ENCODE measurements at regions of chr20 and their contacts with region 1.

Region 1: GRCh38 chr20:18287915-18288748 is at the start of gene ZNF133:
- DNase-seq: peak; percentile 96
- H3K4me3 Mint-ChIP-seq: peak within 1 kb of the TSS; percentile 95
- H3K27ac Mint-ChIP-seq: peak within 1 kb of the TSS; percentile 93
- H3K4me1 Mint-ChIP-seq: peaks cover 29% of the 10 kb centered on the region
- H3K27me3 Mint-ChIP-seq: peaks cover 15% of the 10 kb centered on the region
- total RNA-seq, gene ZNF133: 8.4 to 10.2 TPM

Region 2: DNA sequence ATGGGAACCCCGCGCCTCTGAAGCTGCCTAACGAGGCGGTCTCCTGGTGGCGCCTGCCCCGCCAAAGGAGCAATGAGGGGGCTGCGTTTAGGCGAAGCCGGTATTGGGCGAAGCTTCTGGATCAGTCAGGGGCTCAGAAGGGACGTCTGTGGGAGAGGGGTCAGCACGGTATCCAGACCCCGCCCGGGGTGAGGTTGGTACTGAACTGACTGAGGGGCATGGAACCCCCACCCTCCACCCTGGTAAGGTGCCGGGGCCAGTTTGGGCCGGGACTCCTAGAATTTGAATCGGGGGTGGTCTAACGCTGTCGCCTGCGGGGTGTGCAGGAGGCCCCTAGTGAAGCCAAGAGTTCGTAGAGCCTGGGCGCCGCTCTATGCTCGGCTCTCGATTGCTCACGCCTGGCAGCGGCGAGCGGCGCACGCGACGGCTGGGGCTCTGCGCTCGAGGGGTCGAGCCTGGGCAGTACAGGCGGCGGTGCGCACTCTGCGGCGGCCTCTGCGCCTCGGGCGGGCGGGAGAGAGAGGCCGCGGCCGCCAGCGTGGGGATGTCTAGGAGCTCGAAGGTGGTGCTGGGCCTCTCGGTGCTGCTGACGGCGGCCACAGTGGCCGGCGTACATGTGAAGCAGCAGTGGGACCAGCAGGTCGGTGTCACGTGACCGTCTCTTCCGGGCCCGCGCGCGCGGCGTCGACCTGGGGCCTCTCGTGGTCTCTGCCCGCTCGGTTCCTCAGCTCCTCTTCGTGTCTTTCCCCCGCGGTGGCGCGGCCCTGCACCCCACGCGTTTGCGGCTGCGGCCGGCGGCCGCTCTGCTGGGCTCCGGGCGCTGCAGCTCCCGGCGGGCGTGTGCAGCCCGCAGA is 150.5 kb before region 1 on chr20 and contains the starts of genes KAT14 and PET117:
- CTCF ChIA-PET with region 1: interaction called, 3 read pairs
- POLR2A ChIA-PET with region 1: interaction called, 24 read pairs
- DNase-seq: peak; percentile 91
- H3K4me3 Mint-ChIP-seq: peak within 1 kb of the TSS; percentile 85
- H3K27ac Mint-ChIP-seq: peak within 1 kb of the TSS; percentile 84
- H3K4me1 Mint-ChIP-seq: peaks cover 39% of the 10 kb centered on the region
- H3K27me3 Mint-ChIP-seq: peaks cover 3% of the 10 kb centered on the region
- total RNA-seq, gene KAT14: 13.4 to 15.1 TPM
- total RNA-seq, gene PET117: 12.5 to 14.9 TPM

Region 3: DNA sequence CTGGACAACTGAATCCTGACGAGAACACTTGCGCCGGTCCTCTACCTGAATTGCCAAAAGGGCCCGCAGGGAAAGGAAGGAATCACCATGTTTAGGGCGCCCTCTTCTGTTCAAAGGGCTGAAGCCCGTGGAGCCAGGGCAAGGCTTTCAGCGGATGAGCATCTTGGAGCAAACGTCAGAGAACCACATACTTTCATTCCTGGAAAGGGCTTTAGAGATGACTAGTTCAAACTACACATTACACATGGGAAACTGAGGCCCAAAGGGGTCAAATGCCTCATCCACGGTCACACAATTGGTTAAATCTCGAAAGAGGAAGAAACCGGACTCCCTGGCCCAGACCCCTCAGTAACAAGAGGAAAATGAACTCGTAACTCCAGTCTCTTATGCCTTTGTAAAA is 11.3 kb before region 1 on chr20:
- CTCF ChIA-PET with region 1: interaction called, 12 read pairs
- POLR2A ChIA-PET with region 1: interaction called, 4 read pairs
- DNase-seq: peak; percentile 72
- H3K4me3 Mint-ChIP-seq: no peak overlapping the region
- H3K27ac Mint-ChIP-seq: no peak overlapping the region
- H3K4me1 Mint-ChIP-seq: peaks cover 9% of the 10 kb centered on the region
- H3K27me3 Mint-ChIP-seq: peaks cover 34% of the 10 kb centered on the region

Measured in activated CD4-positive, alpha-beta memory T cell treated with anti-CD3 and anti-CD28 coated beads, Interleukin-2, amount 10 ng/mL, durations not matched to agents 7 days and 5 days (primary cell).